Endothelial cell of umbilical vein (primary cell): ENCODE measurements at regions of chr1 and their contacts with region 1.

Region 1: DNA sequence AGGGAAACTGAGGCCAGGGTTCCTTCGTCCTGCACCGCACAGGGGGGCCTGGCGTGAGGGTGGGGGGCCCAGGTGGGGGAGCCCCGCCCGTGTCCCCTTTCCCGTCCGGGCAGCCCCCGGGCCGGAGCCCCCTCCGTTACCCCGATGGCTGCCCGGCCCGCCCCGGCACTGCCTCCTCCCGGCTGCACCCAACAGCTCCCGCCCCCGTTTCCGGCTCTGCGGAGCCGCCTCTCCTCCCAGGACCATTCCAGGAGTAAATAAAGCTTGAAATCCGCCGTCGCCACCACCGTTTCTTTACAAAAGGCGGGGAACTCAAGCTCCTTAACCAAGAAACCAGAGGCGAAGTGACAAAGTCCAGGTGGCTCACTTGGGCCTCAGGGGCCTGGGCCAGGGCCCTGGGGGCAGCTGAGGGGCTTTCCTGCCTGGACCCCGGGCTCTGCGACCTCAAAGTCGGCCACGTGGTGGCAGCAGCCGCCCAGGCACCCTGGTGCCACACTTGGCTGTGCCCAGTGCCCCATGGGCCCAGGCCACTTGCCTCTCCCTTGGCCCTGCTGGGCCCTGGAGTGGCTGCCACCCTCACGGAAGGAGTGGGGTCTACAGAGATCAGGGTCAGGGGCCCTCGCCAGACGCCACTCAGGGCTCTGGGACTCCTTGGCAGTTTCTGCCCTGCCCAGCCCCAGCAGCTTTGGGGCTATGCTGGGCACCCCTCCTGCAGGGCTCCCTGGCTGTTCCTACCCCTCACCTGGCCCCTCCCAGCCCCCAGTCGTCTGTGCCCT is 514 bp upstream of the FAAP20 start:
- DNase-seq: peak; percentile 86
- H3K4me3 ChIP-seq: peak overlapping the region; percentile 71 to 92 (median 73)
- H3K27ac ChIP-seq: peak overlapping the region; percentile 78
- H3K4me1 ChIP-seq: peaks cover 19% of the 10 kb centered on the region
- H3K27me3 ChIP-seq: no peaks in the 10 kb centered on the region
- CTCF ChIP-seq: peak; percentile 96 to 97
- POLR2A ChIP-seq: peak; percentile 62

Region 2: DNA sequence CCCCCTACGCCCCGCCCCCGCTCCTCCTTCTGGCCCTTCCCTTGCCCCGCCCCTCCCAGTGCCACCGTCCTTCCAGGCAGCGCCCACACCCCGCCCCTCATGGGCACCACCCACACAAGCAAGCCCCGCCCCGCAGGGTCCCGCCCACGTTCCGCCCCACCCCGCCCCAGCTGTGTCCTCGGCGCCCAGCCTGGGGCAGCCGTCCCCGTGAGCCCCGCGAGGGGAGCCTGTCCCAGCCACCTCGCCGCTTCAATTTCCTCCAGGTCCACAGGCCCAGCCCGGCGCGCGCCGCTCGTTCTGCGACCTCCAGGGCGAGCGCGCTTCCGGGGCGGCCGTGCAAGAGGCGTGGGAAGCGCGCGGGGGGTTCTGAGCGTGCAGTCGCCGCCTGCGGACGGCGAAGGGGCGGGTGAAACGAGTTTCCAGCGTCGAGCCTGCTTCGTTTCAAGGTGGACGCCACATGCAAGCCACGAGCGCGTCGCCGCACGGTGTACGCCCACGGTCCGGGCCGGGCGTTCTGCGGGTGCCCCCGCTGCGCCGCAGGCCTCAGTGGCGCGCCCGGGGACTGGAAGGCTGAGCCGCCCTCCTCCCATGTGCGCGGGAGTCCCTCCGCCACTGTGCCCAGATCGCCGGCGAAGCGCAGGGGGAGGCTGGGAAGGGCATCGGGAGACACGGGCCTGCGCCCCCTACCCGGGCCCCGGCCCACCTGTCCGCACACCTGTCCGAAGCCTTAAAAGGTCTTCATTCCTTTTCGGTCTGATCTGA is 10.3 kb after region 1 on chr1:
- CTCF ChIA-PET with region 1: interaction called, 24 read pairs
- POLR2A ChIA-PET with region 1: interaction called, 9 read pairs
- dilution Hi-C with region 1: no loop called
- intact Hi-C with region 1: no loop called
- DNase-seq: peak; percentile 86
- H3K4me3 ChIP-seq: peak overlapping the region in 2 of 3 experiments; percentile 26 to 45
- H3K27ac ChIP-seq: peak overlapping the region; percentile 24
- H3K4me1 ChIP-seq: peaks cover 29% of the 10 kb centered on the region
- H3K27me3 ChIP-seq: no peaks in the 10 kb centered on the region
- CTCF ChIP-seq: no peak
- POLR2A ChIP-seq: no peak

Region 3: DNA sequence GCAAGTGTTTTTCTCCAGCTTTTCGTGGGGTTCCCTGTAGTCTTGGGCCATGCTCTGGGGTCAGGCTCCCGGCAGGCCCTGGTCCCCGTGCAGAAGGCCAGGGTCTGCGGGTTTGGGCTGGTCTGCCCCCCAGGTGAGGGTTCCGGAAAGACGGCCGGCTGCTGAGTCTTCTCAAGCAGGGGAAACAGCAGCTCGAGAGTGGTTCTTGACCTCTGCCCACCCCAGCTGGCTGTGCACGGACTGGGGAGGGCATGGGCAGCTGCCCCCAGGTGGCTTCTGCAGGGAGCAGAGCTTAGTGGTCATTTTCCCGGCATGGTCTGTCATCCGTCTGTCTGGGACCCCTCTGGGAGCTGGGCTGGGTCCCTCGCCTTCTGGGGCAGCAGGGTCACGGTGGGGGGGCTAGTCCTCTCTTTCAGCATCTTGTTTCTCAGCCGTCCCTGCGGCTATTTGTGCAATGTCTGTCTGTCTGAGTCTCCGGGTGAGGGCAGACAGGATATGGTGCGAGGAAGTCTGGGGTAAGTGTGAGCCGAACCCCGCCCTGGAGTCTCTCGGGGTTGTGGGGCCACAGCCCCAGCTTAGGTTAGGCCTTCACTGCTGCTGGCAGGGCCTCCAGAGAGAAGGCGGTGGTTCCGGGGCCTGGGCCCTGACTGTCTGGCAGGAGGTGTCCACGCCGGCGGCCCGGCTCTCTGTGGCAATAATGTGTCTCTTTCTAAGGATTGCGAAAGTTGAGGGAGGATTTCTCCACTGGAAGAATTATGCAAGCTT is 39.1 kb after region 1 on chr1:
- CTCF ChIA-PET with region 1: interaction called, 35 read pairs
- POLR2A ChIA-PET with region 1: interaction called, 4 read pairs
- dilution Hi-C with region 1: no loop called
- intact Hi-C with region 1: loop called (anchors 1 kb)
- DNase-seq: peak; percentile 47
- H3K4me3 ChIP-seq: peak overlapping the region in 2 of 3 experiments; percentile 0 to 10
- H3K27ac ChIP-seq: peak overlapping the region; percentile 46
- H3K4me1 ChIP-seq: peaks cover 40% of the 10 kb centered on the region
- H3K27me3 ChIP-seq: no peaks in the 10 kb centered on the region
- CTCF ChIP-seq: peak in 1 of 2 donors; percentile 9
- POLR2A ChIP-seq: no peak

Region 4: GRCh38 chr1:2372551-2373490 is 177.7 kb after region 1 on chr1:
- CTCF ChIA-PET with region 1: interaction called, 16 read pairs
- POLR2A ChIA-PET with region 1: no interaction called
- dilution Hi-C with region 1: loop called (anchors 10 kb)
- intact Hi-C with region 1: no loop called
- DNase-seq: no peak
- H3K4me3 ChIP-seq: no peak overlapping the region
- H3K27ac ChIP-seq: no peak overlapping the region
- H3K4me1 ChIP-seq: no peaks in the 10 kb centered on the region
- H3K27me3 ChIP-seq: no peaks in the 10 kb centered on the region
- CTCF ChIP-seq: no peak
- POLR2A ChIP-seq: no peak

Region 5: DNA sequence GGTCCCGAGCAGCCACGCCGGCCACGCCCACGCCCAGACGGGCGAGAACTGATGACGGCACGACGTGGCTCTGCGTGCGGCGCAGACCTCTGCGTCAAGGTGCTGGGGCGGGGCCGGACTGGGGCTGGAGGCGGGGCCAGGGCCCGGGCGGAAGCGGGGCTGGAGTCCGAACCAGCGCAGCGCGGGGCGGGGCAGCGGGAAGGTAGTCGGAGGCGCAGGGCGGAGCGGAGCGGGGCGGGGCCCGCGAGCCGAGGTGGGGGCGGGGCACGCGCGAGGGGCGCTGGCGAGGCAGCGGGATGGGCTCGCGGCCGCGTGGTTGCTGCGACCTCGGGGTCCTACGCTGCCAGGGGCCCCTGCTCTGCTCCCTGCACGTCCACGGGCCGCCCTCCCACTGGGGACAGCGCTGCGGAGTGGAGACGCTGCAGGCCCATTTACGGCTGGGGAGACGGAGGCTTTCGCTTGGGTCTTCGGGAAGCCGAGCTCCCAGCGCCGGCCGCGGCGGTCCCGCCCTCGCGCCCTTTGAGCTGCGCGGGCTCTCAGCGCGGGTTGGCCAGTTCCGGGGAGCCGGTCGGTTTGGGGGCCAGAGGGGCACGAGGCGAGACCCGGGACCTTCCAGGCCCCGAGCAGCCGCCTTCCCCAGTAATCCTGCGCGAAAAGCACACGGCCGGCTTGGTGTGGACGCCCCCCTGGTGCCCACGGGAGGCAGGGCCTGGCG is 217.6 kb after region 1 on chr1 and contains the start of gene PEX10:
- CTCF ChIA-PET with region 1: interaction called, 9 read pairs
- POLR2A ChIA-PET with region 1: no interaction called
- dilution Hi-C with region 1: no loop called
- intact Hi-C with region 1: loop called (anchors 1 kb)
- DNase-seq: peak; percentile 95
- H3K4me3 ChIP-seq: peak within 1 kb of the TSS; percentile 57 to 85 (median 71)
- H3K27ac ChIP-seq: peak within 1 kb of the TSS; percentile 57
- H3K4me1 ChIP-seq: peaks cover 10% of the 10 kb centered on the region
- H3K27me3 ChIP-seq: no peaks in the 10 kb centered on the region
- CTCF ChIP-seq: no peak
- POLR2A ChIP-seq: peak; percentile 53
- total RNA-seq, gene PEX10: 23.0 and 26.7 TPM in 2 replicates

Region 6: GRCh38 chr1:3423245-3423829 is 1228.3 kb after region 1 on chr1:
- CTCF ChIA-PET with region 1: interaction called, 11 read pairs
- POLR2A ChIA-PET with region 1: no interaction called
- dilution Hi-C with region 1: no loop called
- intact Hi-C with region 1: loop called (anchors 10 kb)
- DNase-seq: no peak
- H3K4me3 ChIP-seq: no peak overlapping the region
- H3K27ac ChIP-seq: no peak overlapping the region
- H3K4me1 ChIP-seq: no peaks in the 10 kb centered on the region
- H3K27me3 ChIP-seq: no peaks in the 10 kb centered on the region
- CTCF ChIP-seq: no peak
- POLR2A ChIP-seq: no peak